Heart left ventricle (tissue), 16 donors: ENCODE measurements at regions of chr18 and their contacts with region 1.

Region 1: DNA sequence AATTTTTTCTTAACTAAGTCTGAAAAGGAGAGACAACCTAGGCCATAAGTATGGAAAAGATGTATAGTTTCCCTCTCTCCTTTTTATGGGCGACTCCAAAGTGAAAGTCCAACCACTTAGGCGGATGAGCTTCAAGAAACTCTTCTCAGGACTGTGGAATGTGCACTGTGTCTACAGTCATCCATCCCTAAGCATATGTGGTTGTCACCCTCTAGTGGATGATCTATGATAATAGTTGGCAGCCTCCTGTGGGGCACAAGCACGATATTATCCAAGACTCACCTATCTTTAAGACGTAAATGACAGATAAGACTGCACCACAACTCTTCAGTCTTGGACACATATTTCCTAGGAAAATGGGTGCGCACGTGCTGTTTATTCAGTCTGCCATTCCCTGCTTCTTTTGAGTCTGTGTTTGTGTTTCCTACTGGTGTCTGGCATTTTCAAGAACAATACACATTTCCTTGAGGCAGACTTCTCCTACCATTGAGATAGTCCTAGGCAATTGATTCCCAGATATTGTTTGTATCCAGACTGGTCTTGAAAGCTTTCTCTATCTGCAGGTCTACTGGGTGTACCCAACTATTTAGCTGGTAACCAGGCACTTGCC is 145.5 kb upstream of the CTAGE1 start:
- DNase-seq: peak in 2 of 5 donors; percentile 50 to 64
- ATAC-seq: peak; percentile 72 to 80 (median 76)
- H3K4me3 ChIP-seq: peak overlapping the region; percentile 10 to 65 (median 54)
- H3K27ac ChIP-seq: peak overlapping the region; percentile 91 to 99 (median 98)
- H3K4me1 ChIP-seq: peaks cover 0 to 24% (median 7%) of the 10 kb centered on the region in 12 donors
- H3K27me3 ChIP-seq: peaks cover 0 to 28% (median 0%) of the 10 kb centered on the region in 9 donors
- CTCF ChIP-seq: peak; percentile 60 to 85 (median 82)
- POLR2A ChIP-seq: peak in 1 of 2 donors; percentile 34

Region 2: GRCh38 chr18:21997207-21998143 is 565.7 kb before region 1 on chr18:
- intact Hi-C with region 1: loop called in 9 of 10 experiments (anchors 2 to 5 kb)
- DNase-seq: no peak
- ATAC-seq: peak; percentile 62 to 77 (median 70)
- H3K4me3 ChIP-seq: no peak overlapping the region
- H3K27ac ChIP-seq: peak overlapping the region in 9 of 12 donors; percentile 42 to 88 (median 67)
- H3K4me1 ChIP-seq: peaks cover 0 to 26% (median 10%) of the 10 kb centered on the region in 12 donors
- H3K27me3 ChIP-seq: no peaks in the 10 kb centered on the region
- CTCF ChIP-seq: peak; percentile 73 to 91 (median 82)
- POLR2A ChIP-seq: no peak

Region 3: DNA sequence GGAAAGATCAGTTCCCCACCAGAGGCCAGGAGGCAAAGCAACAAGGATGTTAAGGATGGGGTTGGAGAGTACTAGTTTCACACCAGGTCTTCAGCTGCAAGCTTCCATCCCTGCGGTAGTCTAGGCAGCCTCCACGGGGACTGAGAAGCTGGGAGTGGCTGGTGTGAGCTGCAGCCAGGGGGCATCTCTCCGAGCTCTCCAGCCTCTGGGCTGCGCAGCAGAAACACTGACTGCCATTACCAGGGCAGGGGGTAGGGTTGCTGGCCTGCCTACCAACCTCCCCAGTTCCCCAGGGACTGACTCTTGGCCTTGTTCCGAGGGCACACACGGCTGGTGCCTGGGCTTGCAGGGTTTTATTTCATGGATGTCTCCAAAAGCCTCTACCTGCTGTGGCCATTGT is 377.9 kb before region 1 on chr18:
- intact Hi-C with region 1: loop called in 3 of 10 experiments (anchors 5 kb)
- DNase-seq: peak in 2 of 5 donors; percentile 44 to 70
- ATAC-seq: peak; percentile 35 to 71 (median 50)
- H3K4me3 ChIP-seq: peak overlapping the region in 2 of 12 donors; percentile 1 to 12
- H3K27ac ChIP-seq: peak overlapping the region; percentile 65 to 100 (median 83)
- H3K4me1 ChIP-seq: peaks cover 0 to 100% (median 69%) of the 10 kb centered on the region in 12 donors
- H3K27me3 ChIP-seq: no peaks in the 10 kb centered on the region
- CTCF ChIP-seq: peak in 8 of 12 donors; percentile 13 to 52 (median 34)
- POLR2A ChIP-seq: no peak

Region 4: DNA sequence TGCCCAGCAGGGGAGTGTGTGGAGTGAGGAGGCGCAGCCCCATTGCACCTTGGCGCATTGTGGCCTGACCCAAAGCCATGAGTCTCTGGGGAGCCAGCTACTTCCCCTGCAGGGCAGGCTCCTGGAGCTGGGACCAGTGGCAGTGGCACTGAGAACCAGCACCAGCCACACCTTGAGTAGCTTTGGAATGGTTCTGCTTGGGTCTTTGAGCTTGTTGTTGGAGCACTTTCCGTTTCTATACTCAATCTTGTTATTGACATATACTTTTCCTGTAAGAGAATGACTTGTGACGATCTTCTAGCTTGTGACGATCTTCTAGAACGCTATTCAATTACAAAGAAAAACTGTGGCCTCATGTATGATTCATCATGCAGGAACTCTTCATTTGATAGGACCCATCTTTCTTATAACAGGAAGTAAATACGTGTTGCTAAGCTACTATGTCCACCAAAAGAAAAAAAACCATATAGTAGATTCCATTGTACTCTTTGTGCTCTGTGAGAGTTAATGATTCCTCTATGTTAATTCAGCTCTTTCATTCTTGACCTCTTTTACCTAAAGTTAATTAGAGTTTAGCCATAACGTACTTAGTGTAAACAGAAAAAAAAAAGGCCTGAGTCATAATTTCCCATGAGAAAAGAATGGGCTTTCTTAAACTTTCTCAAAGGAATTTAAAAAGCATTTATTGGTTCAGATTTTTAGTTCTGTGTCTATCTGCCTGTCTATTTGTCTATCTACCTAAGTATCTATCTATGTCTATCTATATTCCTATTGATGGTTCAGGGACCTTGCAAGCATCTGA is 280.7 kb before region 1 on chr18:
- intact Hi-C with region 1: loop called in 2 of 10 experiments (anchors 5 kb)
- DNase-seq: no peak
- ATAC-seq: peak in 2 of 4 donors; percentile 21 to 33
- H3K4me3 ChIP-seq: no peak overlapping the region
- H3K27ac ChIP-seq: peak overlapping the region in 1 of 12 donors; percentile 66
- H3K4me1 ChIP-seq: peaks cover 0 to 50% (median 15%) of the 10 kb centered on the region in 12 donors
- H3K27me3 ChIP-seq: no peaks in the 10 kb centered on the region
- CTCF ChIP-seq: no peak
- POLR2A ChIP-seq: no peak

Region 5: DNA sequence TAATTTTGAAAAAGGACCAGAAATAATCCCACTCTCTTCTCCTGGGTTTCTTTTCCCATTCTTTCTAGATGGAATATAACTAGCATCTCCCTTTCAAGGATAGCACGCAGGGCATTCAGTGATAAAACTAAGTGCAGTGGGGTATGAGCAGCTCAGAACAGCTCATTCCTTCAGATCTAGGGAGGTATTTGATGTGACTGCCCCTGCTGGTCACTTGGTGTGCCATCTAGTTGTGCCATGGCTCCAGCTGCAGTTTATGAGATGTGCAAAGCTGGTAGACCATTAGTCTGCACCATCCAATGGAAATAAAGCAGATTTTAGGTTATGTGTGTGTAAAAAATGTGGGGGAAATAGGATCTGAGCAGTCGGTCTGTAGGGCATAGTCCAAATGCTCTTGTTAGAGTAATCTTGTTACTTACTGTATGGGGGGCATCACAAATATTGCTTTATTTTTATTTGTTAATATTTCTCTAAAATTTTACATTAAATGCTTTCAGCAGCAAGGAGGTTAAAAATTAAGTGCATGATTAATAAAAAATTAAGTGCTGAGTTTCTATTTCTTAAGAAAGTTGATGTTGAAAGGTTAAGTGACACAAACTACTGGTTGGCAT is 184.4 kb before region 1 on chr18:
- intact Hi-C with region 1: loop called in 3 of 10 experiments (anchors 5 to 10 kb)
- DNase-seq: peak in 3 of 5 donors; percentile 25 to 39 (median 26)
- ATAC-seq: peak; percentile 76 to 89 (median 81)
- H3K4me3 ChIP-seq: no peak overlapping the region
- H3K27ac ChIP-seq: no peak overlapping the region
- H3K4me1 ChIP-seq: peaks cover 0 to 4% (median 0%) of the 10 kb centered on the region in 12 donors
- H3K27me3 ChIP-seq: no peaks in the 10 kb centered on the region
- CTCF ChIP-seq: peak; percentile 34 to 66 (median 51)
- POLR2A ChIP-seq: no peak

Region 6: DNA sequence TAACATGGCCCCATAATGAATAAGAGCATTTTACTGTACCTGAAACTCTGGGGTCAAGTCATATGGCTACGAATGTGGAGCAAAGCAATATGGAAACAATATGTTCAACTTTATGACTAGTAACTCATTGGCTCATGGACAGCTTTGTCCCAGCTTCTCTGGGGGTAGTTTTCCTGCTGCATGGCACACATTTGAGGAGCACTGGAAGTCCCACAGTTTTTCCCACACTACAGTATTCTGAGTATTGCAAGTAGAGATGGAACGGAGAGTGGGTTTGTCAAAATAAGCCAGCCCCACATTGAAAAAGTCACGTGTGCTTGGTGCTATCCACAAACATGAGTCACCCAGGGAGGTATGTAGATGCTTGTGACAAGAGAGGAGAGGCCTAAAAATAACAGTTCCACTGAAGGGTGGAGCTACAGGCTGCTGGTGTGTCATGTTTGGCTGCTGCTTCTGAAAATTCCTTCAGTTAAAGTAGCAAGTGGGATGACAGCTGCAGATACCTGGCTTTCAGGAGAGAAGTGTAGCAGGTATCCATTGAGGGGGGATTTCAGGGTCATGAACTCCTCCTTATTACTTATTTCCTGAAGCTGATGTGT is 97.2 kb before region 1 on chr18:
- intact Hi-C with region 1: loop called in 7 of 10 experiments (anchors 2 to 10 kb)
- DNase-seq: peak in 4 of 5 donors; percentile 51 to 71 (median 60)
- ATAC-seq: peak; percentile 92 to 94 (median 94)
- H3K4me3 ChIP-seq: peak overlapping the region in 1 of 12 donors; percentile 1
- H3K27ac ChIP-seq: peak overlapping the region; percentile 65 to 96 (median 86)
- H3K4me1 ChIP-seq: peaks cover 0 to 49% (median 34%) of the 10 kb centered on the region in 12 donors
- H3K27me3 ChIP-seq: no peaks in the 10 kb centered on the region
- CTCF ChIP-seq: no peak
- POLR2A ChIP-seq: peak in 1 of 2 donors; percentile 6

Region 7: DNA sequence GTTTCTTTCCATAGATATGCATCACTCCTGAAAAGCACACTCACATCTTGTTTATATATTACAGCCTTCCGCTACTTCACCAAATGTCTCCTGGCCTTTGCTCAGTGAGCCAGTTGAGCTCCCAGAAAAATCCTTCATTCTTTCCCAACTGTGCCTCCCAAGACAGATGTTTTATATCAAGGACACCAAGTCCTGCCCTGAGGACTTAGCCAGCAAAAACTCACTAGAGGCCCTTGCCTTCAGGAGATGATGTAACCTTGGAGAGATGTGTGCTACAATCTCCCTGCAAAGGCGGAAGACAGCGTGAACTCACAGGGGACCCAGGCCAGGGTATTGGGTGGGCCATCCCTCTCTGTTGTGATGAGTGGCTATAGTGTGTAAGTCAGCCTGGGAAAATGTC is 59.4 kb before region 1 on chr18:
- intact Hi-C with region 1: no loop called
- DNase-seq: peak in 4 of 5 donors; percentile 51 to 77 (median 60)
- ATAC-seq: peak; percentile 81 to 95 (median 94)
- H3K4me3 ChIP-seq: no peak overlapping the region
- H3K27ac ChIP-seq: peak overlapping the region in 9 of 12 donors; percentile 29 to 68 (median 50)
- H3K4me1 ChIP-seq: peaks cover 0 to 31% (median 9%) of the 10 kb centered on the region in 12 donors
- H3K27me3 ChIP-seq: no peaks in the 10 kb centered on the region
- CTCF ChIP-seq: no peak
- POLR2A ChIP-seq: no peak